ENCODE measurements at regions of chr4 and their contacts with region 1.

Region 1: DNA sequence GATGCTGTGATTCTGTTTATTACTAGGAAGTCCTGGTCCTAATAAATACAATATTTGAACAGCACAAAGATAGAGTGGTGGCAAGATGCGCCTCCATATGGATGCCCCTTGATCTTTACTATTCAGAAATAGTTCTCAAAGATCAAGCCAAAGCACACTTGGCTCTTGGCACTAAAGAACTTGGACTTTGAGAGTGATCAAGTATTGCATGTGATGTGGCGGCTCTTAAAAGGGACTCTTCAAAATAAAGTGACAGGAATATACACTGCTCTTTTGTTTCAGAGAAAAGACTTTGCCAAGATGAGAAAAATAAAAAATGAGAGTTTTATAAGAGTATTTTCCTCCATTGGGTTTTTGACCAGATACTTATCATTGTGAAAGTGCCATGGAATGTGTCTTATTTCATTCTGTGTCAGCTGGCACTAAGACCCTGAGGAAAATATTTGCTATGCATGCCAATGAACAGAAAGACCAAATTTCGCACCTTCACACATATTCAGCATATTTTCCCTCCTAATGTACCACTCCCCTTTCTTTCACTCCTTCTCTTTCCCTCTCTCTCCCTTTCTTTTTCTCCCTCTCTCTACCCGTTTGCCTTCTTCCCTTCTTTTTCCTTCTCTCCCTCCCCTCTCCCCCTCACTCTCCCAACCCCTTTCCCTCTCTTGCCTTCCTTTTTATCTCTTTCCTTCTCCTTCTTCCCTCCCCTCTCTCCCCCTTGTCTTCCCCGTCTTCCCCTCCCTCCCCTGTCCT is 35.1 kb downstream of the ARHGAP24 start:
- DNase-seq: no peak
- H3K4me3 ChIP-seq: no peak overlapping the region
- H3K27ac ChIP-seq: no peak overlapping the region
- H3K4me1 ChIP-seq: peaks cover 8% of the 10 kb centered on the region
- H3K27me3 ChIP-seq: no peaks in the 10 kb centered on the region
- CTCF ChIP-seq: no peak

Region 2: GRCh38 chr4:85180533-85180932 is 329.5 kb before region 1 on chr4:
- CTCF ChIA-PET with region 1: no interaction called
- POLR2A ChIA-PET with region 1: no interaction called
- intact Hi-C with region 1: no loop called
- DNase-seq: no peak
- H3K4me3 ChIP-seq: no peak overlapping the region
- H3K27ac ChIP-seq: no peak overlapping the region
- H3K4me1 ChIP-seq: no peaks in the 10 kb centered on the region
- H3K27me3 ChIP-seq: no peaks in the 10 kb centered on the region
- CTCF ChIP-seq: no peak

Region 3: DNA sequence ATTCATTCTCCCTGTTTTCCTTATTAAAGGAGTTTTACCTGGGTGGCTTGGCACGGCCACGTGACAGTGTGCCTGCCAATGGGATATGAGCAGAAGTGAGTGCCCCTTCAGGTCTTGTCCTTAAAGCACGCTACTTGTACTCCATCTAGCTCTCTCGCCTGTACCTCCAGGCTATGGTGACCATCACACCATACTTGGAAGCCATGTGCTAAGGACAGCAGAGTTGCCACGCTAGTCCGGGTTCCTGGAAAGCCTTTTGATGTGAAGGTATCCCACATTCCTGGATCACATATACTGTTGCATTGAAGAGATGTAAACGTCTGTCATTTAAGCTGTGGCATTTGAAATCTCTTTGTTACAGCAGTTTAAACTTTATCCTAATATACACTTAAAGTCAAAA is 66.5 kb before region 1 on chr4:
- CTCF ChIA-PET with region 1: no interaction called
- POLR2A ChIA-PET with region 1: interaction called, 10 read pairs
- intact Hi-C with region 1: no loop called
- DNase-seq: no peak
- H3K4me3 ChIP-seq: no peak overlapping the region
- H3K27ac ChIP-seq: no peak overlapping the region
- H3K4me1 ChIP-seq: no peaks in the 10 kb centered on the region
- H3K27me3 ChIP-seq: no peaks in the 10 kb centered on the region
- CTCF ChIP-seq: no peak